CD4-positive, alpha-beta T cell (primary cell): ENCODE measurements at regions of chrX and their contacts with region 1.

Region 1: GRCh38 chrX:153667956-153668396 is 5.6 kb downstream of the PNCK start:
- DNase-seq: peak; percentile 55 to 85 (median 72)
- ATAC-seq: peak; percentile 90
- H3K4me3 ChIP-seq: peak overlapping the region; percentile 14
- H3K4me3 Mint-ChIP-seq: peak overlapping the region; percentile 54
- H3K27ac ChIP-seq: no peak overlapping the region
- H3K27ac Mint-ChIP-seq: no peak overlapping the region
- H3K4me1 ChIP-seq: peaks cover 15% of the 10 kb centered on the region
- H3K4me1 Mint-ChIP-seq: peaks cover 7% of the 10 kb centered on the region
- H3K27me3 ChIP-seq: peaks cover 0 to 2% of the 10 kb centered on the region in 2 experiments
- H3K27me3 Mint-ChIP-seq: peaks cover 8% of the 10 kb centered on the region
- CTCF ChIP-seq: peak; percentile 45

Region 2: DNA sequence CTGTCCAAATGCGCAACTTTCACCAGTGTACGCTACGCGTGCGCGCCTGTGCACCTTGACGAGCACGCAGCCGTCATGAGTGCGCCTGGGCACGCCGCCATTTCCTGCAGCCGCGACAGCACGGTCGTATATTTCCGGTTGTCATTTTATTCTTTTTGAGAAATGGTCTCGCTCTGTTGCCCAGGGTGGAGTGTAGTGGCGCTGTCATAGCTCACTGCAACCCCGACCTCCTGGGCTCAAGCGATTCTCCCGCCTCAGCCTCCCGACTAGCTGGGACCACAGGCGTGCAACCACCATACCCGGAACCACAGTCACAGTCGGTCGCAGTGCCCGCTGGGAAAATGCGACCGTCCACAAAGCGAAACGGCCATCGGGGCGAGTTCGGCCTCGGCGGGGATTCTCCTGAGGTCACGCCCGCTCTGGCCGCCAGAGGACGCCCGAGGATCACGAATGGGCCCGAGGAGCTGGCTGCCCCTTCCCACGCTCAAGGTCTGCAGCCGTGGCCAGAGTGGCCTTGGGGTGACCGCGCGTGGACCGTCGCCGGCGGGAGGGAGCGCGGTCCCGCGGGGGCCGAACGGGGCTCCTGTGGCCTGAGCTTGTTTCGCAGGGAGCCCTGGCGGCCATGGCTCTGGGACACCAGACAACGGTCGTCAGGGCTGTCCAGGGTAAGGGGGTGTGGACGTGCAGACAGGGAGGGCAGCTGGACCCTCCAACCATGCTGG is 635.4 kb before region 1 on chrX:
- CTCF ChIA-PET with region 1: interaction called, 4 read pairs
- POLR2A ChIA-PET with region 1: no interaction called
- intact Hi-C with region 1: loop called in 1 of 2 experiments (anchors 1 kb)
- DNase-seq: peak; percentile 18 to 84 (median 58)
- ATAC-seq: peak; percentile 72
- H3K4me3 ChIP-seq: peak overlapping the region; percentile 59
- H3K4me3 Mint-ChIP-seq: peak overlapping the region; percentile 84
- H3K27ac ChIP-seq: peak overlapping the region in 1 of 2 donors; percentile 29
- H3K27ac Mint-ChIP-seq: peak overlapping the region; percentile 80
- H3K4me1 ChIP-seq: peaks cover 25% of the 10 kb centered on the region
- H3K4me1 Mint-ChIP-seq: peaks cover 5% of the 10 kb centered on the region
- H3K27me3 ChIP-seq: no peaks in the 10 kb centered on the region
- H3K27me3 Mint-ChIP-seq: no peaks in the 10 kb centered on the region
- CTCF ChIP-seq: peak; percentile 70

Region 3: DNA sequence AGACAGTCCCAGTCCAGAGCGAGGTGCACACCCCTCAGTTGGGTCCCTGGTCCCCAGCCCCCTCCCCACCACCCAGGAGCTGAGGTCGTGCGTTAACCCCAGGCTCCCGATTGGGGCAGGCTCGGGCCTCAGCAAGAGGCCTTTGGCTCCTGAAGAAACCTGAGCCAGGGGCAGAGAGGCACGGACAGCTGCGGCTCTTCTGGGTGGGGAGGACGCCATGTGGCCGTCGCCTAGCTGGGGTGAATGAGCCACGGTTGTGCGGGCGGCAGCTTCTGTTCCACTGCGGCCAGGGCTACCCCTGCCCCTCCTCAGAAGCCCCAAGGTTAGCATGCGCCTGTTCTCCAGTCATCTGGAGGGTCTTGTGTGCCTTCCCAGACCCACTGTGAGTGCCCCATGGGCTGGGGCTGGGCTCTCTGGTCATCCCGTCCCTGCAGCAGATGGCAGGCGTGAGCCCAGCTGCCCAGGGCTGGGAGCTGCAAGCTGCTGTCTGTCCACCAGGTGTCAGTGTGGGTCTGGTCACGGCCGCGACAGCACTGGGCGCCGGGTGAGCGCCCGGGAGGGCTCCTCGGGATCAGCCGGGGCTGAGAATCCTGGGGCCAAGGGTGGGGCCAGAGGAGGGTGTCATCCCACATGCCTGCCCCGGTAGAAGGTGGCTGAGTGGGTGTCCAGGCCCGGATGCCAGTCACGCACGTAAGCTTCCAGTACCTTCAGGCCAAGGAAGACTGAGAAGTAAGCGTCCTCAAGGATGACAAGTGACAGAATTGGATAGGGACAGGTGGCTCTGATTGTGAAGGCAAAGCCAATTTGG is 128.6 kb before region 1 on chrX:
- CTCF ChIA-PET with region 1: interaction called, 15 read pairs
- POLR2A ChIA-PET with region 1: no interaction called
- intact Hi-C with region 1: loop called (anchors 2 to 5 kb)
- DNase-seq: peak; percentile 28 to 73 (median 44)
- ATAC-seq: peak; percentile 73
- H3K4me3 ChIP-seq: no peak overlapping the region
- H3K4me3 Mint-ChIP-seq: no peak overlapping the region
- H3K27ac ChIP-seq: no peak overlapping the region
- H3K27ac Mint-ChIP-seq: no peak overlapping the region
- H3K4me1 ChIP-seq: peaks cover 4% of the 10 kb centered on the region
- H3K4me1 Mint-ChIP-seq: no peaks in the 10 kb centered on the region
- H3K27me3 ChIP-seq: no peaks in the 10 kb centered on the region
- H3K27me3 Mint-ChIP-seq: no peaks in the 10 kb centered on the region
- CTCF ChIP-seq: peak; percentile 71

Region 4: DNA sequence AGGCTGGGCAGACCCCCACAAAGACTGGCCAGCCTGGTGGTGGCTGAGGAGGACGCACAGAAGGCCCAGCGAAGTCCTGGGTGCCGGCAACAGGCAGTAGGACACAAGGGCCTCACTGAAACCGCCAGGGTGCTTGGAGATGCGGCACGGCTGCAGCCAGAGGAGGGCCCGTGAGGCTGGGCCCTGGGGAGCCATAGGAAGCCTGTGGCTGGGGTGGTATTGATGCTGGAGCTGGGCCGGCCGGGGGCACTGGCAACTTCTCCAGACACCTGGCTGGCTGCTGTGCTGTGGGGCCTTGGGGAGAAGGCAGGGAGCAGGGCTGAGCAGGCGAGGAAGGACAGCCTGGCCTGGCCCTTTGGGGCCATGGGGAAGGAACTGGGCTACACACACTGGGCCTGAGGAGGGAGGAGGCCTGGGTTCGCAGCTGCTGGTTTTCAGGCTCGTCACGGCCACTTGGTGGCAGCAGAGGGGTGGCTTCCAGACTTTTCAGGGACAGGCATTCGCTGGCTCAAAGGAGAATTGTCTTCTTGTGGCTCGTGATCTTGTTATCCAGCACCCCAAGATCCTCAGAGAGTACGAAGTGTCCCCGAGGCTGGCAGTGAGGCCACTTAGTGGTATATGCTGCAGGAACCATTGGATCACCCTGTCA is 113.3 kb before region 1 on chrX:
- CTCF ChIA-PET with region 1: interaction called, 11 read pairs
- POLR2A ChIA-PET with region 1: interaction called, 7 read pairs
- intact Hi-C with region 1: loop called (anchors 2 kb)
- DNase-seq: peak; percentile 40 to 76 (median 54)
- ATAC-seq: peak; percentile 68
- H3K4me3 ChIP-seq: no peak overlapping the region
- H3K4me3 Mint-ChIP-seq: no peak overlapping the region
- H3K27ac ChIP-seq: no peak overlapping the region
- H3K27ac Mint-ChIP-seq: no peak overlapping the region
- H3K4me1 ChIP-seq: peaks cover 2% of the 10 kb centered on the region
- H3K4me1 Mint-ChIP-seq: no peaks in the 10 kb centered on the region
- H3K27me3 ChIP-seq: peaks cover 0 to 2% of the 10 kb centered on the region in 2 experiments
- H3K27me3 Mint-ChIP-seq: no peaks in the 10 kb centered on the region
- CTCF ChIP-seq: peak; percentile 46

Region 5: DNA sequence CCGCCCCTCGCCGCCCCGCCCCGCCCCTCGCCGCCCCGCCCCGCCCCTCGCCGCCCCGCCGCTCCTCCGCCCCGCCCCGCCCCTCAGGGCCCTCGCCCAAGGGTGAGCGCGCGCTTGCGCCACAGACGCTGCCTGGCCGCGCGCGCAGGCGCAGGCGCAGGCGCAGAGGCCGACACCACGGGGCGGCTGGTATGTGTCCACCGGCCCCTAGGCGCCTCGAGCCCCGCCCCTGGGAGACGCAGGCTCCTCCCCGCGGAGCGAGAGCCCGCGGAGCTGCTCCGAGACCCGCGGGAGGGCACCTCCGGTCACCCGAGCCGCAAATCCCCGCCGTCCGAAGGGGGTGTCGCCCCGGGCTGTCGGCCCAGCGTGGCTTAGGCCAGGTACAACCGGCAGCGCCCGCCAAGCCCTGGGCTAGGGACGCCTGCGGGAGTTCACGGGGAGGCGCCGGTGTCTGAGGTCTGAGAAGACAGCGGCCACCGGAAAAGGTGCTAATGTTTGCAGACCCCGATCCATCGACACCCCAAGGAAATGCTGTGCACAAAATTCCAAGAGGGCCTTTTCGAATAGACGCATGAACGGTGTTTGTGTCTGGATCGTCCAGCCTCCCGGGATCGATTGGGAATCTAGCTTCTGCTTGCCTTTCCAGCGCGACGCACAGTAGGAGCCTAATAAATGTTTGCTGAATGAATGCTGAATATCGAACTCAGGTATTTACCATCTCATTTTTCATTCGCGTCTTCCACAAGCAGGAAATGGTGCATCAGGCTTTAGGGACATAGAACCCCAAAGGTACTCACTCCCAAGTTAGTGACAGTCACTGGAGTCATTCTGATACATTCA is 68.6 kb before region 1 on chrX:
- CTCF ChIA-PET with region 1: no interaction called
- POLR2A ChIA-PET with region 1: no interaction called
- intact Hi-C with region 1: no loop called
- DNase-seq: peak; percentile 66 to 94 (median 84)
- ATAC-seq: peak; percentile 81
- H3K4me3 ChIP-seq: peak overlapping the region; percentile 79
- H3K4me3 Mint-ChIP-seq: peak overlapping the region; percentile 90
- H3K27ac ChIP-seq: peak overlapping the region in 1 of 2 donors; percentile 34
- H3K27ac Mint-ChIP-seq: peak overlapping the region; percentile 50
- H3K4me1 ChIP-seq: peaks cover 51% of the 10 kb centered on the region
- H3K4me1 Mint-ChIP-seq: peaks cover 45% of the 10 kb centered on the region
- H3K27me3 ChIP-seq: no peaks in the 10 kb centered on the region
- H3K27me3 Mint-ChIP-seq: no peaks in the 10 kb centered on the region
- CTCF ChIP-seq: no peak